Mammary epithelial cell (primary cell): ENCODE measurements at regions of chr11 and their contacts with region 1.

Region 1: GRCh38 chr11:66001942-66002647 is at the starts of genes BANF1 and EIF1AD:
- DNase-seq: peak; percentile 99
- H3K4me3 ChIP-seq: peak within 1 kb of the TSS; percentile 76 to 98 (median 86)
- H3K27ac ChIP-seq: peak within 1 kb of the TSS; percentile 82
- H3K4me1 ChIP-seq: peaks cover 15% of the 10 kb centered on the region
- H3K27me3 ChIP-seq: no peaks in the 10 kb centered on the region
- CTCF ChIP-seq: no peak
- total RNA-seq, gene BANF1: 22.8 to 174 TPM
- total RNA-seq, gene EIF1AD: 26.8 to 36.9 TPM

Region 2: DNA sequence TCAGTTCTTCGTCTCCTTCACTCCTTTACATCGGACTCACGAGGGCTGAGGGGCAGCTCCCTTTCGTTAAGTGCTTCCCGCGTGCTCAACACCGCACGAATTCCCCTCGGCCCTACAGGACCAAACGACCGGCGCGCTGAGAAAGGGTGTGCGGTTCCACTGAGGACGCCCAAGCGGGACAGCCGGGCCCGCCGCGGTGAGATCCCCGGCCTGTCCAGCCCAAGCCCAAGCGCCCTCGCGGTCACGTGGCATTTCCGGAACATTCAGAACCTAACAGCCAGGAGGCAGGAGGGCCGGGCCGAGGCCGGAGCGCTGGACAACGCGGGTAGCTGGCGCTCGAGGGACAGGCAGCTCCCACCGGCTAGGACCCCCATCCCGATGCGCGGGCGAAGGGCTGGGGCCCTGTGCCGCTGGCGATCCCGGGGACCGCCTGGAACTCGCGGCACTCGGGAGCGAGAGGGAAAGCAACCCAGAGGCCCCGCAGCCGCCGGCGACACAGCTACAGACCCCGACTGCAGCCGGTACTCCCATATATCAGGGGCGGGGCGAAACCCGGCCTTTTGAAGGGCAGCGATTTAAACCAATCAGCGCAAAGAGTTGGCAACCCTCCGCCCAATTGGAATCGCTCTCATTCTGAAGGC is 1816.8 kb before region 1 on chr11:
- CTCF ChIA-PET with region 1: no interaction called
- dilution Hi-C with region 1: no loop called
- in situ Hi-C with region 1: no loop called
- intact Hi-C with region 1: no loop called
- DNase-seq: no peak
- H3K4me3 ChIP-seq: peak overlapping the region; percentile 45 to 72 (median 72)
- H3K27ac ChIP-seq: peak overlapping the region; percentile 55
- H3K4me1 ChIP-seq: peaks cover 14% of the 10 kb centered on the region
- H3K27me3 ChIP-seq: no peaks in the 10 kb centered on the region
- CTCF ChIP-seq: peak in 1 of 2 donors; percentile 56

Region 3: GRCh38 chr11:65060913-65061408 is 941.1 kb before region 1 on chr11:
- CTCF ChIA-PET with region 1: no interaction called
- dilution Hi-C with region 1: no loop called
- in situ Hi-C with region 1: no loop called
- intact Hi-C with region 1: no loop called
- DNase-seq: peak; percentile 8
- H3K4me3 ChIP-seq: no peak overlapping the region
- H3K27ac ChIP-seq: no peak overlapping the region
- H3K4me1 ChIP-seq: no peaks in the 10 kb centered on the region
- H3K27me3 ChIP-seq: no peaks in the 10 kb centered on the region
- CTCF ChIP-seq: no peak

Region 4: DNA sequence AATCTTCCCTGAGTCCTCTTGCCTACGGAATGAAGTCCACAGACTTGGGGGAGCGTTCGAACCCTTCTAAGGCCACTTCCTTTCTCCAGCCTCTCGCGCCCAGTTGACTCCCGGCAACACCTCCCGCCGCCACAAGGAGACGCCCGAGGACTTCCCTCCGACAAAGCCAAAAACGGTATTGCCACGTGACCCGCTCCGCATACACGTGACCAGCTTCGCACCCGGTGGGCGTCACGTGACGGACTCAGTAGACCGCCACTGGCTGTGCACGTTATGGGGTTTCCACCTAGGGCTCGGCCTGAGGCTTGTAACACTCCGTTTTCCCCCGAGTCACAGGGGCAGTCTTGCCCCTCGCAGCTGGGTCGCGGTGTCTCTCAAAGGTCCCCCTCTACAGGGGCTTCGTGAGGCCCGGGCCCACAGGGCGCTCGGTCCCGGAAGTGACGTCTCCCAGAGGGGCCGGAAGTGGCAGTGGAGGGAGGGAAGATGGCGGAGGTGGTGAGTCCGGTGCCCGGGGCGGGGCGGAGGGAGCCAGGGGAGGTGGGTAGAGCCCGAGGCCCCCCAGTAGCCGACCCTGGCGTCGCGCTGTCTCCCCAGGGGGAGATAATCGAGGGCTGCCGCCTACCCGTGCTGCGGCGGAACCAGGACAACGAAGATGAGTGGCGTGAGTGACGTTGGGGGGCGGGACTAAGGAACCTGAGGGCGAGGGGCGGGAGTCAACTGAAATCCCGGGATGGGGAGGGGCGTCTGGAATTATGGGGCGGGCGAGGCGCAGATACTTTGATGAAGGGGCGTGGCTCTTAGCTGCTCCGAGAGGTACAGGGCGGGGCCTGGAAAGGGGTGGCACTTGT is 290.1 kb before region 1 on chr11 and contains the start of gene KAT5:
- CTCF ChIA-PET with region 1: no interaction called
- dilution Hi-C with region 1: no loop called
- in situ Hi-C with region 1: loop called (anchors 25 kb)
- intact Hi-C with region 1: no loop called
- DNase-seq: peak; percentile 97
- H3K4me3 ChIP-seq: peak within 1 kb of the TSS; percentile 56 to 80 (median 61)
- H3K27ac ChIP-seq: peak within 1 kb of the TSS; percentile 93
- H3K4me1 ChIP-seq: peaks cover 14% of the 10 kb centered on the region
- H3K27me3 ChIP-seq: no peaks in the 10 kb centered on the region
- CTCF ChIP-seq: peak; percentile 94 to 99
- total RNA-seq, gene KAT5: 26.5 to 49.9 TPM

Region 5: DNA sequence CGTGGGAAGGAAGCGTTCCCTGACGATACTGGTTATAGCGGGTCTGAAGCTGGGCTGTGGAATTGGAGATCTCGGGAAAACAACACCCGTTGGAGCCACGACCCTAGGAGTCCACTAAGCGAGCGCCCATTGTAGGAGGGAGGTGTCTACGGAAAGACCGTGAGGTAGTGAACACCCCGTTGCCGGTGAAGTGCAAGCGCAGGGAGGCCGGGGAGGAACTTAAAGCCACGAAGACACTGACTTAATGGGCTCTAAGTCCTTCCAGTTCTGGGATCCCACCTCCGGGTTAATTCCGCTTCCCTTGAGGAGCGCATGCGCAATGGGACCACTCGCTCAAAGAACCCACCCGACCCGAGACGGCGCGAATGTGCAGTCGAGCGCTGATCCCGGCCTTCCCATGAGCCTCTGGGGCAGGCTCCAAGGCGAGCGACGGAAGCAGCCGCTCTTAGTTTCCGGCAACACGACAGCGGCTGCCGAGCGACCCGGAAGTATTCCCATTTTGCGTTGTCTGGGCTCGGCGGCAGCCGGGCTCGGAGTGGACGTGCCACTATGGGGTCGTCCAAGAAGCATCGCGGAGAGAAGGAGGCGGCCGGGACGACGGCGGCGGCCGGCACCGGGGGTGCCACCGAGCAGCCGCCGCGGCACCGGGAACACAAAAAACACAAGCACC is 40.7 kb before region 1 on chr11 and contains the start of gene SART1:
- CTCF ChIA-PET with region 1: no interaction called
- dilution Hi-C with region 1: no loop called
- in situ Hi-C with region 1: no loop called
- intact Hi-C with region 1: loop called (anchors 1 kb)
- DNase-seq: peak; percentile 94
- H3K4me3 ChIP-seq: peak within 1 kb of the TSS; percentile 58 to 98 (median 65)
- H3K27ac ChIP-seq: peak within 1 kb of the TSS; percentile 71
- H3K4me1 ChIP-seq: peaks cover 10% of the 10 kb centered on the region
- H3K27me3 ChIP-seq: no peaks in the 10 kb centered on the region
- CTCF ChIP-seq: no peak
- total RNA-seq, gene SART1: 16.5 to 50.7 TPM

Region 6: GRCh38 chr11:66045177-66045639 is 43.1 kb after region 1 on chr11:
- CTCF ChIA-PET with region 1: no interaction called
- dilution Hi-C with region 1: no loop called
- in situ Hi-C with region 1: no loop called
- intact Hi-C with region 1: loop called (anchors 1 kb)
- DNase-seq: peak; percentile 40
- H3K4me3 ChIP-seq: no peak overlapping the region
- H3K27ac ChIP-seq: no peak overlapping the region
- H3K4me1 ChIP-seq: no peaks in the 10 kb centered on the region
- H3K27me3 ChIP-seq: no peaks in the 10 kb centered on the region
- CTCF ChIP-seq: peak; percentile 79 to 94

Region 7: GRCh38 chr11:66069715-66070603 is 67.9 kb after region 1 on chr11 and contains the start of gene PACS1:
- CTCF ChIA-PET with region 1: no interaction called
- dilution Hi-C with region 1: no loop called
- in situ Hi-C with region 1: no loop called
- intact Hi-C with region 1: loop called (anchors 5 kb)
- DNase-seq: peak; percentile 48
- H3K4me3 ChIP-seq: peak within 1 kb of the TSS; percentile 76 to 82 (median 78)
- H3K27ac ChIP-seq: peak within 1 kb of the TSS; percentile 26
- H3K4me1 ChIP-seq: peaks cover 22% of the 10 kb centered on the region
- H3K27me3 ChIP-seq: no peaks in the 10 kb centered on the region
- CTCF ChIP-seq: no peak
- total RNA-seq, gene PACS1: 34.0 to 48.1 TPM

Region 8: DNA sequence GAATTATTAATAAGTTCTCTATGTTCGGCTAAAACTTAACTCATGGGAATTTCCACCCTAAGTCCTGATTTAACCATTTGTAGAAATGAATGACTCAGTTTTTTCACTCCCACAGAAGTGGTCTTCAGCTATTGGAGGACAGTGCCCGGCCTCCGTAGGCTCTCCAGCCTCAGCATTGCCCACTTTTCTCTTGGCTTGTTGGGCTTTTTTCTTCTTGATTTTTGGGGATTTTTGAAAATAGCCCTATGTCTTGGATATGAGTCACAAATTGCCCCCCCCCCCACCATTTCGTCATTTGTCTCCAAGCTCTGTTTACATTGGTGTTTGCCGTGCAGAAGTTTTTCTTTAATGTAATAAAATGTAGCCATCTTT is 134.6 kb after region 1 on chr11:
- CTCF ChIA-PET with region 1: no interaction called
- dilution Hi-C with region 1: no loop called
- in situ Hi-C with region 1: no loop called
- intact Hi-C with region 1: loop called (anchors 5 kb)
- DNase-seq: no peak
- H3K4me3 ChIP-seq: no peak overlapping the region
- H3K27ac ChIP-seq: no peak overlapping the region
- H3K4me1 ChIP-seq: no peaks in the 10 kb centered on the region
- H3K27me3 ChIP-seq: no peaks in the 10 kb centered on the region
- CTCF ChIP-seq: no peak